ENCODE measurements at regions of chr7 and their contacts with region 1.

Region 1: DNA sequence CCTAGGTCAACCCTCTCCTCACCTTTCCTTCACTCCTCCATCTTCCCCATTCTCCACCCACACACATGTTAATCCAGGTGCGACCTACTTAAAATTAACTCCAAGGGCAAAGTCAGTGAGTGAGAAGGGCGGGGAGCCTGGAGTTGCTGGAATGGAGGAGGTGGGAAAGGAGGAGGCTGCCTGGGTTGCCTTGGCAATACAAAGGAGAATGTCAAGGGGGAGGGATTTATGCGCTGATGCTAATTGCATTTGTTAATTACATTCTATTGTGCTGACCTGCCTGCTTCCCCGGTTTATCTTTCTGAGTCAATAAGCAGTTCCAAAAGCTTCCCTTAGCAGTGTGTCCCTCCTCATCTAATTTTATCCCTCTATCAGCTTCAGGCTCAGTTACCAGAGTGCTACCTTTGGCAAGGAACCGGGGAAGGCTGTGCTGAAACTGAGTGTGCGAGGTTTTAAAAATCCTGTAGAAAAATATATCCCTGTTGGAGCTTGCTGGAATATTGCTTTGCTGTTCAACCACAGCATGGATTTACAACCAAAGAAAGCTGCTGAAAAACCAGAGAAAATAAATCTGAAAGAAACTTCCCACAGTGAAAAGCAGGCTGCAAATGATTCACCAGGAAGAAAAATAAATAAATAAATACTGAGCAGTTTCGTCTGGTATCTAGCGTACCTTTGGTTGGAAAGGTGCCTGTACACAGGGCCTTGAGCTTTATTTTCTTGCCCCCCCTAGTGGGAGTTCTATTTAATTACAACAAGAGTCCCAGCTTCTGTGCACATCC is 113.2 kb upstream of the DGKB start:
- DNase-seq: peak; percentile 76
- H3K4me3 ChIP-seq: peak overlapping the region; percentile 35
- CTCF ChIP-seq: peak; percentile 64

Region 2: DNA sequence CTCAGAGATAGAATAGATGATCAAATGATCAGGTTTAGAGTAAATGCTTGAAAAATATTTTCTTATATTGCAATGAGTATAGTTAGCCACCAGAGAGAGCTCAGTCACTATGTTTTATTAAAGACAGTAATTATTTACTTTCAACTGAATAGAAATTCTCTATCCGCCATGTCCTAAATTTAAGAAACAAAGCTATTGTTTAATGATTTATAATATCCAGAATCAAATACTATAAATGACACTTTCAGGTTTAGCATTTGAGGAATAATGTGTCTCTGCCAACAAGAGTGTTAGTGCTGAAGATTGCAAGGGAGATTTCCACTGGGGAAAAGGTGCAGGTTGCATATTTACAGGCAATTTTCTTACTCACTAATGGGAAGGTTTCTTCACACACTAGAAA is 297.9 kb before region 1 on chr7:
- in situ Hi-C with region 1: loop called (anchors 25 kb)
- DNase-seq: peak; percentile 26
- H3K4me3 ChIP-seq: no peak overlapping the region
- CTCF ChIP-seq: no peak